Psoas muscle (tissue), 8 donors: ENCODE measurements at regions of chr20 and their contacts with region 1.

Region 1: DNA sequence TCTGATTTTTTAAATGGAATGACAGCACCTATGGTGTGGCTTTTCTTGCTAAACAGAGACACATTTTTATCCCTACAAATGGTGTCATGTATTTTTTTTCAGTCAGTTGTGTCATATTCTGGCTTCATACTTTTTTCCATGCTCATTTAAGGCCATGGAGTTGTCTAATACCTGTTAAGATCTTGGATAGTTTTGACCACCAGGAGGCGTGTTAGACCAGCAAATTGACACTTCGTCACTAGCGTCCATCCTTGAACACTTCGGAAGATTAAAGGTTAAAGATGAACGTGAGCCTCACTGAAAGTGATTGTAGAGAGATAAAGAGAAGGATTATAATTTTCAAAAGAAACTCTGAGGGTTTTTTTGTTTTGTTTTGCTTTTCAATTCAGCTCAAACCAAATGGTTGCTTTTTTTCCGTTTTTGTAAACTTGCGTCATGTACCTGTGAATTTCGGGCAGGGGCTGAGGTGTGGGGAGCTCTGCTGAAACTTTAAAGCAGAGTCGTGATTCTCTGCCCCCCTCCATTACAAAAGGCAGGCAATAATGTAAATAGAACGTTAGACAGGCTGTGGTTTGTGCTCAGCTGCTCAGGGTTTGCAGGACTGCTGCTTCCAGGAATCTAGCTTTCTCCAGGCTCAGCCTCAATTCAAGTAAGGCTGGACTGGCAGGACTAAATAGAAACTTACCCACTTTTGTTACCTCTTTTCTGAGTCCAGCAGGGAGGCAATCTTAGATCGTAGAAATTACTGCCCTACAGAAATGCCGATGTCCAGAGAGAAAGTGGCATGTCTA is 245.1 kb downstream of the FOXA2 start:
- DNase-seq: no peak
- ATAC-seq: peak; percentile 51 to 83 (median 70)
- H3K4me3 ChIP-seq: no peak overlapping the region
- H3K27ac ChIP-seq: no peak overlapping the region
- H3K4me1 ChIP-seq: no peaks in the 10 kb centered on the region
- H3K27me3 ChIP-seq: no peaks in the 10 kb centered on the region
- CTCF ChIP-seq: peak; percentile 85

Region 2: DNA sequence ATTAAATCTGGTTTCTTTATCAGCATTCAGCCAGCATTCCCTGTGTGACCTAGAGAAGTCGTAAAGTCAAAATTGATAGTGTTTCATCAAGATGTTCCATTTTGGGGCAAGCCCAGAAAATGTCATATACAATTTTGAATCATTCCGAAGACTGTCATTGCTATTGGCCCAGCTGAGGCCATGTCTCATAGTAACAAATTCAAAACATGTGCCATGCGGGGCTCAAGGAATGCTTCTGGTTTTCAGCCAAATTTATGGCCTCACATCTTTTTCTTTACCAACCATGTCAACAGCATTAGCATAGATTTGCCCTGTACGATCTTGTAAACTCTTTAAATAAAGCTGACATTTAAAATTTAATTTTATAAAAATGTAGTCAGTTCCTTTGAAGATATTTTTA is 319.1 kb before region 1 on chr20:
- intact Hi-C with region 1: no loop called
- DNase-seq: no peak
- ATAC-seq: no peak
- H3K4me3 ChIP-seq: no peak overlapping the region
- H3K27ac ChIP-seq: no peak overlapping the region
- H3K4me1 ChIP-seq: no peaks in the 10 kb centered on the region
- H3K27me3 ChIP-seq: no peaks in the 10 kb centered on the region
- CTCF ChIP-seq: no peak

Region 3: GRCh38 chr20:22586645-22587310 is 247.5 kb after region 1 on chr20:
- intact Hi-C with region 1: loop called (anchors 2 to 10 kb)
- DNase-seq: peak in 1 of 2 donors; percentile 65
- ATAC-seq: peak in 2 of 4 donors; percentile 59 to 76
- H3K4me3 ChIP-seq: no peak overlapping the region
- H3K27ac ChIP-seq: no peak overlapping the region
- H3K4me1 ChIP-seq: peaks cover 8% of the 10 kb centered on the region
- H3K27me3 ChIP-seq: peaks cover 22 to 84% (median 43%) of the 10 kb centered on the region in 3 donors
- CTCF ChIP-seq: peak; percentile 47

Region 4: GRCh38 chr20:22684072-22684762 is 344.9 kb after region 1 on chr20:
- intact Hi-C with region 1: loop called (anchors 2 kb)
- DNase-seq: peak; percentile 37 to 69
- ATAC-seq: peak; percentile 77 to 92 (median 84)
- H3K4me3 ChIP-seq: no peak overlapping the region
- H3K27ac ChIP-seq: no peak overlapping the region
- H3K4me1 ChIP-seq: no peaks in the 10 kb centered on the region
- H3K27me3 ChIP-seq: no peaks in the 10 kb centered on the region
- CTCF ChIP-seq: peak; percentile 79